Activated CD4-positive, alpha-beta memory T cell treated with anti-CD3 and anti-CD28 coated beads, Interleukin-2, amount 10 ng/mL, durations not matched to agents 7 days and 5 days (primary cell): ENCODE measurements at regions of chr11 and their contacts with region 1.

Region 1: GRCh38 chr11:65418711-65419459 is 3.7 kb upstream of the NEAT1 start:
- DNase-seq: peak; percentile 95
- H3K4me3 Mint-ChIP-seq: peak overlapping the region; percentile 97
- H3K27ac Mint-ChIP-seq: peak overlapping the region; percentile 99
- H3K4me1 Mint-ChIP-seq: peaks cover 47% of the 10 kb centered on the region
- H3K27me3 Mint-ChIP-seq: peaks cover 5% of the 10 kb centered on the region

Region 2: DNA sequence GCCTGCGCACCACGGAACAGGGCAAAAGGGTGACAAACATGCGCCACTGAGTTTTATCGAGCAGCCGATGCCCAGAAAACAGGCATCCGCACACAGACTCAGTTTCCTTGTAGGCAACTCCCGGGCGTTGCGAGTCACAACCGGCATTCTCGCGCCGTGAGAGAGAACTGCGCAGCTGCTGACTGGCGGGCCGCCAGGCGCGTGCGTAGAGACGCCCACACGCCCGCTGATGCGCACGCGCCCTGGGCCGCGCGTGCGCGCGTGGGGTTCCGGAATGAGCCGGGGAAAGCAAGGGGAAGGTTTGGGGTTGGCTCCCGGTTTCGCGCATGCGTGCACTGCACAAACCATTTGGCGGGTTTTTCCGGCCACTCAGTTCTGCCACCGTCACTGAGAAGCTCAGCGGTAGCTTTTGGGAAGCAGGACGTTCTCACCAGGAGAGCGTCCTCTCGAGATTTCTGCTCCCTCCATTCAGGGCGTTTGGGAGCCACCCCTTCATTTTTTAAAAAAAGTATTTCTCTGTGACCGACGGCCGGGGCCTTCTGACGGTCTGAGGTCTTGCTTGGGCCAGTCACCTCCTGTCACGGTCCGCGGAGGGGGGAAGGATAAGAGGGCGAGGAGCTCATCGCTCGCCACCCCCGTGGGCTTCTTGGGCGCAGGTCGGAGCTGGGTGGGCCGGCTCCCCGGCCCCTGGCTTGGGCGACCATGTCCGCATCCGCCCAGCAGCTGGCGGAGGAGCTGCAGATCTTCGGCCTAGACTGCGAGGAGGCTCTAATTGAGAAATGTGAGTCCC is 157.1 kb before region 1 on chr11 and contains the start of gene POLA2:
- CTCF ChIA-PET with region 1: interaction called, 3 read pairs
- POLR2A ChIA-PET with region 1: interaction called, 39 read pairs
- DNase-seq: peak; percentile 96
- H3K4me3 Mint-ChIP-seq: peak within 1 kb of the TSS; percentile 95
- H3K27ac Mint-ChIP-seq: peak within 1 kb of the TSS; percentile 92
- H3K4me1 Mint-ChIP-seq: peaks cover 60% of the 10 kb centered on the region
- H3K27me3 Mint-ChIP-seq: no peaks in the 10 kb centered on the region
- total RNA-seq, gene POLA2: 42.0 to 51.1 TPM

Region 3: GRCh38 chr11:65403607-65404121 is 15.2 kb before region 1 on chr11:
- CTCF ChIA-PET with region 1: interaction called, 4 read pairs
- POLR2A ChIA-PET with region 1: interaction called, 501 read pairs
- DNase-seq: no peak
- H3K4me3 Mint-ChIP-seq: no peak overlapping the region
- H3K27ac Mint-ChIP-seq: no peak overlapping the region
- H3K4me1 Mint-ChIP-seq: peaks cover 2% of the 10 kb centered on the region
- H3K27me3 Mint-ChIP-seq: no peaks in the 10 kb centered on the region

Region 4: DNA sequence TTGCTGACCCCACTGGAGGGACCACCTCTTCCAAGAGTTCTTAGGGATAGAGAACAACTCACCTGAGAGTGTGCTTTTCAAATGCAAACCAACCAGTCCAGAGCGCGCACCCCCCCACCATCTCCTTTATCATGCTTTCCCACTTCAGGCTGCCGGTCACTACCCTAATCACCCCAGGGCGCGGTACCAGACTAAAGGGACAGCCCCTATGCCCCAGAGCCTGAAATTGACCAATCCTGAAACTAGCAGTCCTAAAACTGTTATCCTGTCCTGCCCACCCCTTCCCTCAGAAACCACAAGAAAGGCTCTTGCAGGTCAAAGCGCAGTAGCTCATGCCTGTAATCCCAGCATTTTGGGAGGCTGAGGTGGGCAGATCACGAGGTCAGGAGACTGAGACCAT is 40.7 kb after region 1 on chr11:
- CTCF ChIA-PET with region 1: interaction called, 10 read pairs
- POLR2A ChIA-PET with region 1: interaction called, 670 read pairs
- DNase-seq: no peak
- H3K4me3 Mint-ChIP-seq: no peak overlapping the region
- H3K27ac Mint-ChIP-seq: no peak overlapping the region
- H3K4me1 Mint-ChIP-seq: peaks cover 28% of the 10 kb centered on the region
- H3K27me3 Mint-ChIP-seq: peaks cover 1% of the 10 kb centered on the region

Region 5: GRCh38 chr11:65524741-65525545 is 106.1 kb after region 1 on chr11 and contains the start of gene SCYL1:
- CTCF ChIA-PET with region 1: interaction called, 11 read pairs
- POLR2A ChIA-PET with region 1: interaction called, 35 read pairs
- DNase-seq: peak; percentile 86
- H3K4me3 Mint-ChIP-seq: peak within 1 kb of the TSS; percentile 80
- H3K27ac Mint-ChIP-seq: peak within 1 kb of the TSS; percentile 83
- H3K4me1 Mint-ChIP-seq: peaks cover 56% of the 10 kb centered on the region
- H3K27me3 Mint-ChIP-seq: no peaks in the 10 kb centered on the region
- total RNA-seq, gene SCYL1: 56.9 to 58.5 TPM

Region 6: DNA sequence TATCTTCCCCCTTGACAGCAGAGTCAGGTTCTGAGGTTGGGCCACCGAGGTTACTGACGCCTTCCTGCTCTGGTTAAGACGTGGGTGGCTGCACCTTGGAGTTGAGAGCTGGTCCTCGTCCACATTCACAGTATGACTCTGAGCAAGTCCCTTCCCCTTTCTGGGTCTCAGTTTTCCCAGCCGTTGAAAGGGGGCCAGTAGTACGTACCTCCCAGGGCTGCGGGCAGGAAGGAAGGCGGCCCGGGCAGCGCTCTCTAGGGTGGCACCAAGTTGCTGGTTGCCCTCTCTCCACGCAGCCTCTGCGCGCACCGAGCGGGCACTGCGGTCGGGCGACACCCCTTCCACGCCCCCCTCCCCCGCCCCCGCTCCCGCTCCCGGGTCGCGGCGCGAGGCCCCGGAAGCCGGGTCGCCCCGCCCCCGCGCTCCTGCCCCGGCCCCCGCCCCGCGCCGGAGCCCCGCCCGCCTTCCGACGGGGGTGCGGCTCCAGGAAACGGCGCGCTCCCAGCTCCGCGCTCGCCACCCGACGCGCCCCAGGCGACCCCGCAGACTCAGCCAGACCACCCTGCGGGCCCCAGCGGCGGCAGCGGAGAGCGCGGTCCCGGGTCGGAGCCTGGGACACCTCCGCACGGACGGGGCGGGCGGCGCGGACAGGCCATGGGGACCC is 156.8 kb after region 1 on chr11 and contains the start of gene EHBP1L1:
- CTCF ChIA-PET with region 1: interaction called, 3 read pairs
- POLR2A ChIA-PET with region 1: interaction called, 43 read pairs
- DNase-seq: peak; percentile 87
- H3K4me3 Mint-ChIP-seq: peak within 1 kb of the TSS; percentile 88
- H3K27ac Mint-ChIP-seq: peak within 1 kb of the TSS; percentile 97
- H3K4me1 Mint-ChIP-seq: peaks cover 57% of the 10 kb centered on the region
- H3K27me3 Mint-ChIP-seq: no peaks in the 10 kb centered on the region
- total RNA-seq, gene EHBP1L1: 118 to 119 TPM